ENCODE measurements at regions of chr13 and their contacts with region 1.

Region 1: GRCh38 chr13:32381539-32381938 is 46.4 kb downstream of the N4BP2L1 start:
- DNase-seq: peak; percentile 2
- H3K4me3 Mint-ChIP-seq: no peak overlapping the region
- H3K27ac Mint-ChIP-seq: no peak overlapping the region
- H3K4me1 Mint-ChIP-seq: no peaks in the 10 kb centered on the region
- H3K27me3 Mint-ChIP-seq: no peaks in the 10 kb centered on the region
- CTCF ChIP-seq: no peak

Region 2: DNA sequence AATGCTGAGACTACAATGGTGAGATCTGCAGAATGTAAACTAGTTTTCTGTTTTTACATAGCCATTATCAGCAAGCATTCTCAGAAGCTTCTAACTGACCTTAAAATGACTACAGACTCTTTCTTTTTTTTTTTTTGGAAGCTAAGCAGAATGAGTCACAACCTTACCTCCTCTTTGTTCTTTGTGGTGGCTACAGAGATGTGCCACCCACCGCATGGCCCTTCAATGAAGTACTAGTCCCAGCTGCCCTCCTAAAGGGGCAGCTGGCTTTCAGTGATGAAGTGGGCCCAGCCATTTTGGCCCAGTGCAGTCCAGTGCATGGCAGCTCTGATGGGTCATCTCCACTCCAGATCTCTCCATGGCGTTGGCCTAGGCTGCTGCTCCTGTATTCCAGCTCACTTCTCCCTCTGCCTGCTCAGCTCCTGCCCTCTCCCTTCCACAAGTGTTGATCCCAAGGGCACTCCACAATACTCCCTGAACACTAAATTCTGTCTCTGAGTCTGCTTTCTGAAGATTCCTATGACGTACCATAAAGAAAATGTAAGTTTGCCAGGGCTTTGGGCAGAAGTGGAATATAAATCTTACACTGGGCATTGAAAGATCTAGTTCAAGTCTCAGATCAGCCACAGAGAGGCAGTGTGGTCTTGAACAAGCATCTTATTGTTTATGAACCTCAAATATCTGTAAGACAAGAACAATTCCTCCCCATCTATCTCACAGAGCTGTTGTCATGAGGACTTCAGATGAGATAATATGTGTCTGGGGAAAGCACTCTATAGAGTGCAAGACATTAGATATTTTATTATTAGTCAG is 556.6 kb before region 1 on chr13:
- CTCF ChIA-PET with region 1: no interaction called
- intact Hi-C with region 1: no loop called
- DNase-seq: no peak
- H3K4me3 Mint-ChIP-seq: no peak overlapping the region
- H3K27ac Mint-ChIP-seq: no peak overlapping the region
- H3K4me1 Mint-ChIP-seq: peaks cover 6% of the 10 kb centered on the region
- H3K27me3 Mint-ChIP-seq: no peaks in the 10 kb centered on the region
- CTCF ChIP-seq: no peak

Region 3: GRCh38 chr13:32415019-32415418 is 33.5 kb after region 1 on chr13:
- CTCF ChIA-PET with region 1: no interaction called
- intact Hi-C with region 1: no loop called
- DNase-seq: peak; percentile 10
- H3K4me3 Mint-ChIP-seq: no peak overlapping the region
- H3K27ac Mint-ChIP-seq: no peak overlapping the region
- H3K4me1 Mint-ChIP-seq: no peaks in the 10 kb centered on the region
- H3K27me3 Mint-ChIP-seq: no peaks in the 10 kb centered on the region
- CTCF ChIP-seq: peak; percentile 33

Region 4: GRCh38 chr13:32581177-32581786 is 199.7 kb after region 1 on chr13:
- CTCF ChIA-PET with region 1: no interaction called
- intact Hi-C with region 1: loop called (anchors 5 kb)
- DNase-seq: no peak
- H3K4me3 Mint-ChIP-seq: no peak overlapping the region
- H3K27ac Mint-ChIP-seq: no peak overlapping the region
- H3K4me1 Mint-ChIP-seq: no peaks in the 10 kb centered on the region
- H3K27me3 Mint-ChIP-seq: no peaks in the 10 kb centered on the region
- CTCF ChIP-seq: peak; percentile 13

Region 5: GRCh38 chr13:32737111-32737571 is 355.6 kb after region 1 on chr13:
- CTCF ChIA-PET with region 1: no interaction called
- intact Hi-C with region 1: no loop called
- DNase-seq: no peak
- H3K4me3 Mint-ChIP-seq: peak overlapping the region; percentile 46
- H3K27ac Mint-ChIP-seq: peak overlapping the region; percentile 83
- H3K4me1 Mint-ChIP-seq: peaks cover 12% of the 10 kb centered on the region
- H3K27me3 Mint-ChIP-seq: no peaks in the 10 kb centered on the region
- CTCF ChIP-seq: no peak